ENCODE measurements at regions of chr5 and their contacts with region 1.

Region 1: GRCh38 chr5:136062366-136063274 is 33.8 kb downstream of the TGFBI start:
- DNase-seq: no peak
- H3K4me3 ChIP-seq: no peak overlapping the region
- CTCF ChIP-seq: peak; percentile 38

Region 2: GRCh38 chr5:135887351-135887864 is 175.2 kb before region 1 on chr5:
- CTCF ChIA-PET with region 1: interaction called, 46 read pairs
- POLR2A ChIA-PET with region 1: no interaction called
- DNase-seq: peak; percentile 5
- H3K4me3 ChIP-seq: no peak overlapping the region
- CTCF ChIP-seq: peak; percentile 77

Region 3: GRCh38 chr5:135950611-135951010 is 112.0 kb before region 1 on chr5:
- CTCF ChIA-PET with region 1: interaction called, 55 read pairs
- POLR2A ChIA-PET with region 1: no interaction called
- DNase-seq: peak; percentile 33
- H3K4me3 ChIP-seq: no peak overlapping the region
- CTCF ChIP-seq: no peak

Region 4: GRCh38 chr5:136028782-136029742 is 33.6 kb before region 1 on chr5 and contains the start of gene TGFBI:
- CTCF ChIA-PET with region 1: interaction called, 24 read pairs
- POLR2A ChIA-PET with region 1: interaction called, 9 read pairs
- DNase-seq: no peak
- H3K4me3 ChIP-seq: peak within 1 kb of the TSS; percentile 82
- CTCF ChIP-seq: peak; percentile 26

Region 5: DNA sequence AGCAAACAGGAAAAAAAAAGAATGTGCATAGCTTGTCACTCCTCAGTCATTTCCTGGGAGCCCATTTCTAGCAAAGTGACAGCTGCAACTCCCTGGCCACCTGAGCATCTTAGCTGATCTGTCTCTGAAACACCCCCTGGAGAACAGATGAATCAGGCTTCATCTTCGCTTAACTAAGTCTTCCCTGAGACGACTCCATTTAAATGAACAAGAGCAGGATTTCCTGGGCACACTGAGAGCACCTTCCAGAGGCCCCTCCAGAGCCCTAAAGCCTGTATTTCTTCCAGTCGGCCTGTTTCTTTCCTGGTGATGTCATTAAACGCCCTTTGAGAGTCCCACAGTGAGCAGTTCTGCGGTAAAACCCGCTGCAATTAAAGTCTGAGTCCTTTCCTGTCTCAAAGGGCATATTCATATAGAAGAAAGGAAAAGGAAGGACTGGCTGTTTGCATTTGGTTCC is 19.9 kb before region 1 on chr5:
- CTCF ChIA-PET with region 1: interaction called, 20 read pairs
- POLR2A ChIA-PET with region 1: interaction called, 3 read pairs
- DNase-seq: no peak
- H3K4me3 ChIP-seq: no peak overlapping the region
- CTCF ChIP-seq: no peak

Region 6: DNA sequence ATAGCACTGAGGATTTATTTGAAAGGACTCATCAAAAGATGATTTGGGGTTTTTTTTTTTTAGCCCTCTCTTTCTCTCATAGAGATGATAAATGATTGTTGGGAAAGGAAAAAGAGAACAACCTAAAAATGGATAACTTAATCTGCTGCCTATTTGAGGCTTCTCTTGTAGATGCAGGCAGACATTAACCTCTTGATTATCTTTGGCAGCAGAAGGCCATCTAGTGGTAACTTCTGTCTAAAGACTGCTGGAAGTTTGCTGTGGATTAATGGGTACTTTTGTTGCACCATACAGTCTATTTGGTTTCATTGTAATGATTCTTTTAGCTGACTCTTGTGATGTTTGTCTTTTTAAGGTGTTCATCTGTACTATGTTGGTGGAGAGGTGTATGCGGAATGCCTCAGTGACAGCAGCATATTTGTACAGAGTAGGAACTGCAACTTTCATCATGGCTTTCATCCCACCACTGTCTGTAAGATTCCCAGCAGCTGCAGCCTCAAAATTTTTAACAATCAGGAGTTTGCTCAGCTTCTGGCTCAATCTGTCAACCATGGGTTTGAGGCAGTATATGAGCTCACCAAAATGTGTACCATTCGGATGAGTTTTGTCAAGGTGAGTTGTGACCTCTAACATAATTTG is 111.5 kb after region 1 on chr5:
- CTCF ChIA-PET with region 1: interaction called, 17 read pairs
- POLR2A ChIA-PET with region 1: no interaction called
- DNase-seq: peak; percentile 37
- H3K4me3 ChIP-seq: no peak overlapping the region
- CTCF ChIP-seq: peak; percentile 71